Activated CD8-positive, alpha-beta T cell treated with anti-CD3 and anti-CD28 coated beads for 36 hours (primary cell): ENCODE measurements at regions of chr21 and their contacts with region 1.

Region 1: GRCh38 chr21:42878993-42879787 is at the start of gene WDR4:
- DNase-seq: peak; percentile 99
- ATAC-seq: peak; percentile 92
- H3K4me3 Mint-ChIP-seq: peak within 1 kb of the TSS; percentile 94
- H3K27ac Mint-ChIP-seq: peak within 1 kb of the TSS; percentile 99
- H3K4me1 Mint-ChIP-seq: peaks cover 27% of the 10 kb centered on the region
- H3K27me3 Mint-ChIP-seq: no peaks in the 10 kb centered on the region
- CTCF ChIP-seq: no peak
- total RNA-seq, gene WDR4: 49.8 to 53.5 TPM

Region 2: GRCh38 chr21:42833439-42833815 is 45.8 kb before region 1 on chr21:
- CTCF ChIA-PET with region 1: no interaction called
- POLR2A ChIA-PET with region 1: no interaction called
- intact Hi-C with region 1: no loop called
- DNase-seq: peak; percentile 81
- ATAC-seq: peak; percentile 85
- H3K4me3 Mint-ChIP-seq: no peak overlapping the region
- H3K27ac Mint-ChIP-seq: peak overlapping the region; percentile 43
- H3K4me1 Mint-ChIP-seq: peaks cover 32% of the 10 kb centered on the region
- H3K27me3 Mint-ChIP-seq: peaks cover 4% of the 10 kb centered on the region
- CTCF ChIP-seq: peak; percentile 45

Region 3: GRCh38 chr21:42864815-42865775 is 14.1 kb before region 1 on chr21:
- CTCF ChIA-PET with region 1: no interaction called
- POLR2A ChIA-PET with region 1: interaction called, 11 read pairs
- intact Hi-C with region 1: no loop called
- DNase-seq: no peak
- ATAC-seq: no peak
- H3K4me3 Mint-ChIP-seq: no peak overlapping the region
- H3K27ac Mint-ChIP-seq: peak overlapping the region; percentile 38
- H3K4me1 Mint-ChIP-seq: peaks cover 22% of the 10 kb centered on the region
- H3K27me3 Mint-ChIP-seq: no peaks in the 10 kb centered on the region
- CTCF ChIP-seq: no peak

Region 4: DNA sequence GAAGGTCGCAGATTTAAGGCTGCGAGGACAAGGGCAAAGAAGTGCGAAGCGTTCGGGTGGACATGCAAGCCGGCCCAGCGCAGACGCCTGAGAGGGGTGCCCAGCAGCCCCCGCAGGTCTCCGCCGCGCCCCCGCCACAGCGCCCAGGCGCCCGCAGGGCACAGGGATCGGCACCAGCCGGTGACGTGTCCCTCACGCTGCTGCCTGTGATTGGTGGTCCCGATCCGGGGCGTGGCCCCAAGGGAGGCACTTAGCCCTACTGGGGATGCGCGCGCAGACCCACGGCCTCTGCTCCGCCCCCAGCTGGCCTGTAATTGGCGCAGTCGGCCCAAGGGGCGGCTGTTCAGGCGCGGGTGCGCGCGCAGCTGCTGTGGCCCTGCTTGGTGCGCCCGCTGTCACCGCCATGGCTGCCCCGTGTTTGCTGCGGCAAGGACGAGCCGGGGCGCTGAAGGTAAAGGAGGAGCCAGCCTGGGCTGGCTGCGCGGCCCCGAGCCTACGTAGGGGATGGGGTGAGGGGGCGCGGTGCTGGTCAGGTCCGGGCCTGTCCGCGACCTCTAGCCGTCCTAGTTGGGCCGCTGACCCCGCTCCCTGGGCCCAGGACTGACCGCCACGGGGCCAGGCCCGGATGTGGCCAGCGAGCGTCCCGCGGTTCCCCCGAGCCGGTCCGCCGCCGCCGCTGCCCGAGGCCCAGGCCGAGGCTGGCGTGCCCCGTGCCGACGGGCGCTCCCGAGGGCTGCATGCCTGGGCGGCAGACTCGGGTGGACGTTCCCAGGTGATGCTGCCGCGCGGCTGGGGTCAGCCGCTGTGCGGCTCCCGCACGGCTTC is 14.0 kb after region 1 on chr21 and contains the start of gene NDUFV3:
- CTCF ChIA-PET with region 1: no interaction called
- POLR2A ChIA-PET with region 1: interaction called, 21 read pairs
- intact Hi-C with region 1: no loop called
- DNase-seq: peak; percentile 100
- ATAC-seq: peak; percentile 96
- H3K4me3 Mint-ChIP-seq: peak within 1 kb of the TSS; percentile 87
- H3K27ac Mint-ChIP-seq: peak within 1 kb of the TSS; percentile 92
- H3K4me1 Mint-ChIP-seq: peaks cover 11% of the 10 kb centered on the region
- H3K27me3 Mint-ChIP-seq: no peaks in the 10 kb centered on the region
- CTCF ChIP-seq: no peak
- total RNA-seq, gene NDUFV3: 29.0 to 29.8 TPM